RWPE1 (cell line): ENCODE measurements at regions of chr17 and their contacts with region 1.

Region 1: GRCh38 chr17:3738562-3739295 is 15.0 kb downstream of the HASPIN start:
- DNase-seq: peak; percentile 46
- H3K27ac ChIP-seq: no peak overlapping the region
- CTCF ChIP-seq: no peak

Region 2: GRCh38 chr17:3750926-3751325 is 12.2 kb after region 1 on chr17:
- CTCF ChIA-PET with region 1: interaction called, 13 read pairs
- POLR2A ChIA-PET with region 1: no interaction called
- DNase-seq: no peak
- H3K27ac ChIP-seq: no peak overlapping the region
- CTCF ChIP-seq: no peak

Region 3: GRCh38 chr17:3762922-3763776 is 24.4 kb after region 1 on chr17:
- CTCF ChIA-PET with region 1: no interaction called
- POLR2A ChIA-PET with region 1: no interaction called
- DNase-seq: no peak
- H3K27ac ChIP-seq: no peak overlapping the region
- CTCF ChIP-seq: no peak

Region 4: DNA sequence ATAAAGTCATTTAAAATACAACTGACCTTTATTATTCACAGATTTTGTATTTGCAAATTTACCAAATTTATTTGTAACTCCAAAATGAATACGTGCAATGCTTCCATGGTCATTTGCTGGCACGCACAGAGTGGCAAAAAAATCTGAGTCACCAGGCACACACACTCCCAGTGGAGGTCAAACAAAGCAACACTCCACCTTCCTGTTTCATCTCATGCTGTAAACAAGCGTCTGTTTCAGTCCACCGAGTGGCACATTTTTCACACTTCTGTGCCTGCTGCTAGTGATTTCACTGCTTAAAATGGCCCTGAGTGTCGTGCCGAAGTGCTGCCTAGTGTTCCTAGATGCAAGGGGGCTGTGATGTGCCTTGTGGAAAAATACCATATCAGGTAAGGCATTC is 80.1 kb after region 1 on chr17:
- CTCF ChIA-PET with region 1: interaction called, 10 read pairs
- POLR2A ChIA-PET with region 1: no interaction called
- DNase-seq: no peak
- H3K27ac ChIP-seq: no peak overlapping the region
- CTCF ChIP-seq: no peak

Region 5: GRCh38 chr17:3838206-3838605 is 99.5 kb after region 1 on chr17:
- CTCF ChIA-PET with region 1: interaction called, 11 read pairs
- POLR2A ChIA-PET with region 1: no interaction called
- DNase-seq: peak; percentile 38
- H3K27ac ChIP-seq: no peak overlapping the region; the same call in 1 of the 2 replicates
- CTCF ChIP-seq: no peak